Cardiac septum (tissue), 1 donor: ENCODE measurements at regions of chr17 and their contacts with region 1.

Region 1: GRCh38 chr17:50783193-50783660 is 15.9 kb upstream of the ANKRD40CL start:
- DNase-seq: peak; percentile 91

Region 2: DNA sequence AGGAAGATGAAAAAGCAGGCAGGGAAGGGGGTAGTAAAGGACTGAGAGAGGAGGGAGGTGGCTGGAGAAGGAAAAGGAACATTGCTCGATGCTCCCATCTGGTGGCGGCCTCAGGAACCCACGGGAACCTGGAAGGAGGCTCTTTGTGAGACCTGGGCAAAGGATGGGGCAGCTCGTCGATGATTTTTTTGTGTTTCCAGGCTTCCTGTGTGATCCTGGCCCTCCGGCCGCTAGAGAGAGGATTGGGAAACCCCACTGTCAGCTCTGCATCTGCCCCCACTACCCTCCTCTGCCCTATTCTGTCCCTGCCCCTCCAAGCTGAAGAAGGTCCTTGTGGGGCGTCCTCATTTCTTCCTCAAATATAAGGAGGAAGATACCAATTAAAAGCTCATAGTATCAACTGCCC is 58.7 kb after region 1 on chr17:
- intact Hi-C with region 1: loop called (anchors 1 kb)
- DNase-seq: no peak

Region 3: GRCh38 chr17:50956750-50957523 is 173.7 kb after region 1 on chr17:
- intact Hi-C with region 1: loop called (anchors 5 kb)
- DNase-seq: no peak